ENCODE measurements at regions of chr14 and their contacts with region 1.

Region 1: GRCh38 chr14:49173765-49174373 is 412.3 kb downstream of the RPS29 start:
- DNase-seq: peak; percentile 27
- ATAC-seq: peak; percentile 99
- H3K4me3 ChIP-seq: no peak overlapping the region
- H3K27ac ChIP-seq: no peak overlapping the region
- H3K4me1 ChIP-seq: no peaks in the 10 kb centered on the region
- H3K27me3 ChIP-seq: no peaks in the 10 kb centered on the region
- CTCF ChIP-seq: peak; percentile 70 to 74 (median 73); a peak in 5 of 6 replicates
- EP300 ChIP-seq: no peak
- POLR2A ChIP-seq: no peak
- RAD21 ChIP-seq: peak; percentile 87

Region 2: GRCh38 chr14:48398675-48399282 is 775.1 kb before region 1 on chr14:
- CTCF ChIA-PET with region 1: interaction called, 3 read pairs
- POLR2A ChIA-PET with region 1: no interaction called
- RAD21 ChIA-PET with region 1: no interaction called
- SMC1A ChIA-PET with region 1: no interaction called
- in situ Hi-C with region 1: no loop called
- intact Hi-C with region 1: loop called (anchors 10 kb)
- DNase-seq: no peak
- ATAC-seq: peak; percentile 65
- H3K4me3 ChIP-seq: no peak overlapping the region
- H3K27ac ChIP-seq: no peak overlapping the region
- H3K4me1 ChIP-seq: no peaks in the 10 kb centered on the region
- H3K27me3 ChIP-seq: no peaks in the 10 kb centered on the region
- CTCF ChIP-seq: peak; percentile 63 to 70 (median 64)
- EP300 ChIP-seq: no peak
- POLR2A ChIP-seq: no peak
- RAD21 ChIP-seq: peak; percentile 63

Measured in GM12878 (cell line).